ENCODE measurements at regions of chr14 and their contacts with region 1.

Region 1: GRCh38 chr14:24141097-24141880 is at the start of gene EMC9:
- DNase-seq: peak; percentile 100
- H3K4me3 ChIP-seq: peak within 1 kb of the TSS; percentile 63
- H3K27ac ChIP-seq: peak within 1 kb of the TSS; percentile 94
- H3K4me1 ChIP-seq: peaks cover 30% of the 10 kb centered on the region
- H3K27me3 ChIP-seq: no peaks in the 10 kb centered on the region
- CTCF ChIP-seq: peak; percentile 48
- total RNA-seq, gene EMC9: 21.1 to 49.6 TPM

Region 2: DNA sequence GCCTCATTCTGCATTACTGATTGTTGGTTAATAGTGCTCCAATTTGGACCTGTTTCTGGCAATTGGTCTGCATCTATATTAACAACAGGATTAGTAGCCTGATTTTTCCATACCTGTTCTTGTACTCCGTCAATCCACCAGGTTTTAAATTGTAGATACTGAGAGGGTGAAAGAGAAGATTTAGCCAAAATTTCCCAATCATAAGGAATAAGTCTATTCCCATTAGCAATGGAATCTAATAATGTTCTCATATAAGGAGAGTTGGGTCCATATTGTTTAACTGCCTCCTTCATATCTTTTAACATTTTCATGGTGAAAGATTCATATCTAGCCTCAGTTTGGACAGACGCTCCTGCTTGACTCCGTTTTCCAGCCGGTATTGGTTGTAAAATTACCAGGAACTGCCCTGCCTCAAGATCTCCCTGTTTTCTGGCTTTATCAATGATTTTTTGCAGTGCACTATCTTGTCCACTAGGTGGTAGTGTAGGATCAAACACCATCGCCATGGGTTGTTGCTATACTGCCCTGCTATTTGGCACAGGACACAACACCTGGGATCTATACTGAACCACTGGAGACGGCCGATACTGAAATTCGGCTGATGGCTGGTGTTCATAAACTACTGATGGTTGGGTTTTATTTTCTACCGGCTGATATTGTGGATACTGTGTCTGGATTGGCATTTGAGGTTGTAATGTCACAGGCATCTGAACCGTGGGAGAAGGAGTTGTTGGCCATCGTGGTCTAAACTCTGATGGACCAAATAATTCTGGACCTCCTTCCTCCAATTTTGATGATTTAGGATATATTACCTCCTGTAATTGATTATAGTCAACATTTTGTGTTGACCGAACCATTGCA is 127.4 kb before region 1 on chr14:
- intact Hi-C with region 1: no loop called
- DNase-seq: peak; percentile 73
- H3K4me3 ChIP-seq: no peak overlapping the region
- H3K27ac ChIP-seq: no peak overlapping the region
- H3K4me1 ChIP-seq: no peaks in the 10 kb centered on the region
- H3K27me3 ChIP-seq: no peaks in the 10 kb centered on the region
- CTCF ChIP-seq: peak; percentile 90

Region 3: GRCh38 chr14:24114536-24115450 is 26.5 kb before region 1 on chr14 and contains the starts of genes DCAF11 and NRL:
- intact Hi-C with region 1: loop called (anchors 2 kb)
- DNase-seq: peak; percentile 99
- H3K4me3 ChIP-seq: peak within 1 kb of the TSS; percentile 80
- H3K27ac ChIP-seq: peak within 1 kb of the TSS; percentile 98
- H3K4me1 ChIP-seq: peaks cover 6% of the 10 kb centered on the region
- H3K27me3 ChIP-seq: no peaks in the 10 kb centered on the region
- CTCF ChIP-seq: no peak
- total RNA-seq, gene DCAF11: 89.2 to 106 TPM
- total RNA-seq, gene NRL: 0.88 to 2.7 TPM

Region 4: DNA sequence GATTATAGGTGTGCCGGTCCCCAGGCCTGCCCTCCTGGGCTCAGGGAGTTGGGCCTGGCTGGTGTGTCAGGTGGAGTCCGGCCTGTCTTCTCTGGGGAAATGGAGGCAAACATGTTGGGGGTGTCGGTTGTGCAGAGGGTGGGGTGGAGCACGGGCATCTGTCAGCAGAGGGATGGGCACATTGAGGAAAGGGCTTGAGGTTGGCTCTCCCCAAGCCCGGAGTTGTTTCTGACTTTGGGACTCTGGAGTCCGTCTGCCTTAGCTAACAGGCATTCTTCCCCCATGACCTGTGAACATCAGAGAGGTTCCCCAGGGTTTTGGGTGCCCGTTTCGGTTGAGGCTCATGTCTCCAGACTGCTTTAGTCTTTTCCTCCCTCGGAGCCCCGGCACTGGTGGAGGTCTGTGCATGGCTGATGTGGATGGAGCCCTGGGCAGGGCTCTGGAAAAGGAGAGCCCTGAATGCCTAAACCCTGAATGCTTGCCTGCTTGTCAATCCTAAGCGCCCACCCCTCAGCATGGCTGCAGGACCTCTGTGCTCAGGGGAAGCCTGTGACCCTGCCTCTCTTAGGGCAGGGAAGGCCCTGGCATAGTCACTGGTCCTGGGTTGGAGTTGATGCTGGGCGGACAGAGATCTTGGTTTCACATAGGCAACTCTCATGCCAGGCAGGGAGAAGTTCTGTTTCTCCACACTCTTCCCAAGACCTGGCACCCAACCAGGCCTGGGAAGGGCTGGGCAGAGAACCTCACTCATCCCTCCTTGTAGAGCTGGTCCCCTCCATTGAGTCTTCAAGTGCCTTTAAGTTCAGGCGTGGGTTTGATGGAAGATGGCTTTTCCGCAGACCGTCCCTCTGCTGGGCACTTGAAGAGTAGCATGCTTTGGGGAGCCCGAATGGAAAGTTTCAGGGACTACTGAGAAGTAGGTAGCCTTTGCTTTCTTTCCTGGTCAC is 270.4 kb after region 1 on chr14:
- intact Hi-C with region 1: no loop called
- DNase-seq: no peak
- H3K4me3 ChIP-seq: no peak overlapping the region
- H3K27ac ChIP-seq: no peak overlapping the region
- H3K4me1 ChIP-seq: no peaks in the 10 kb centered on the region
- H3K27me3 ChIP-seq: no peaks in the 10 kb centered on the region
- CTCF ChIP-seq: peak; percentile 64